Lower leg skin (tissue), 4 donors: ENCODE measurements at regions of chr6 and their contacts with region 1.

Region 1: DNA sequence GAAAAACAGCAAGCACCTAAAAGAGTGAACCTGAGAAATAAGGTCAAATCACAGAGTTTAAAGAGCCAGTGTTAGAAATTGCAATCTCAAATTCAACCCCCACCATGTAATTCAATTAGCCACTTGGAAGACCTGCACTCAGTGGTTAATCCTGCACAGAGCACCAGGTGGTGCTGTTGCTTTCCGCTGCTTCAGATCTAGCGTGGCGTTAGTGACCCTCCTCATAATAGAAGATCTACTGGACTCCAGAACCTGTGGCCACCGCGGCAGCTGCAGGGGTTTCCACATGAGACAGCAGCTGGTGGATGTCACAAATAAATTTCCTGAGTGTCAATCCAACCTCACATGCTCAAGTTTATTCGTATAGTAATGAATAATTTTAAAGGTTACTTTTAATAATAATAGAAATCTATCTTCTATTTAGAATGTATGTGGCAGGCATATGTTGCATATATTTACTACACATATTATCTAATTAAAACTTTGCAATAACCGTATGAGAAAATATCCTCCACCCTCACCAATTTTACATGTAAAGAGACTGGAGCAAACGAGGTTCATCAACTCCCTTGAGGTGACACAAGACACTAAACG is 84.4 kb downstream of the SYNE1 start:
- DNase-seq: peak; percentile 39 to 86
- H3K4me3 ChIP-seq: no peak overlapping the region
- CTCF ChIP-seq: peak in 1 of 3 donors; percentile 26
- POLR2A ChIP-seq: no peak

Region 2: GRCh38 chr6:152642989-152643388 is 90.3 kb after region 1 on chr6:
- intact Hi-C with region 1: loop called (anchors 10 kb)
- DNase-seq: peak in 1 of 2 donors; percentile 41
- H3K4me3 ChIP-seq: no peak overlapping the region
- CTCF ChIP-seq: no peak
- POLR2A ChIP-seq: no peak

Region 3: DNA sequence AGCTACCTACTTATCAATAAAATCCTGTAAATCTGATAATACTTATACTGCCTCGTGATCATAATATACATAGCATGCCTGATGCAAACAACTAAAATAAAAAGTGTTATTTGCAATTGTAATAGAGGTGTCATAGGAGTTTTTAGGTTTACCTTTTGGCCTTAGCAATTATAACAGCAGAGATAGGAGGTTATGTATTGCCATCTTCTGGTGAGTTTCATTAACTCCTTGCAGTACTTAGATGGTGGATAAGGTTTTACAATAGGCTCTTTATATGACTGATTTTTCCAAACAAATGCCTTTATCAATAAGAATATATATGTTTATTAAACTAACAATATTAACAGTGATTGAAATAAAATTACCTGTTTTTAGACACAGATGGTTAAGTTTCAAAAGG is 117.2 kb after region 1 on chr6:
- intact Hi-C with region 1: loop called (anchors 5 kb)
- DNase-seq: no peak
- H3K4me3 ChIP-seq: no peak overlapping the region
- CTCF ChIP-seq: no peak
- POLR2A ChIP-seq: no peak